Gastrocnemius medialis (tissue), 4 donors: ENCODE measurements at regions of chr20 and their contacts with region 1.

Region 1: GRCh38 chr20:53869466-53870258 is 200.7 kb downstream of the BCAS1 start:
- DNase-seq: peak; percentile 33 to 38
- ATAC-seq: peak; percentile 80 to 95
- H3K4me3 ChIP-seq: no peak overlapping the region
- H3K27ac ChIP-seq: peak overlapping the region in 2 of 4 donors; percentile 13 to 45
- H3K4me1 ChIP-seq: peaks cover 5 to 23% of the 10 kb centered on the region in 2 donors
- H3K27me3 ChIP-seq: no peaks in the 10 kb centered on the region
- CTCF ChIP-seq: peak; percentile 42 to 74 (median 62)
- POLR2A ChIP-seq: no peak

Region 2: GRCh38 chr20:53570521-53571357 is 298.9 kb before region 1 on chr20:
- in situ Hi-C with region 1: loop called in 1 of 4 experiments (anchors 10 kb)
- intact Hi-C with region 1: no loop called
- DNase-seq: no peak
- ATAC-seq: no peak
- H3K4me3 ChIP-seq: no peak overlapping the region
- H3K27ac ChIP-seq: no peak overlapping the region
- H3K4me1 ChIP-seq: no peaks in the 10 kb centered on the region
- H3K27me3 ChIP-seq: no peaks in the 10 kb centered on the region
- CTCF ChIP-seq: no peak
- POLR2A ChIP-seq: no peak

Region 3: DNA sequence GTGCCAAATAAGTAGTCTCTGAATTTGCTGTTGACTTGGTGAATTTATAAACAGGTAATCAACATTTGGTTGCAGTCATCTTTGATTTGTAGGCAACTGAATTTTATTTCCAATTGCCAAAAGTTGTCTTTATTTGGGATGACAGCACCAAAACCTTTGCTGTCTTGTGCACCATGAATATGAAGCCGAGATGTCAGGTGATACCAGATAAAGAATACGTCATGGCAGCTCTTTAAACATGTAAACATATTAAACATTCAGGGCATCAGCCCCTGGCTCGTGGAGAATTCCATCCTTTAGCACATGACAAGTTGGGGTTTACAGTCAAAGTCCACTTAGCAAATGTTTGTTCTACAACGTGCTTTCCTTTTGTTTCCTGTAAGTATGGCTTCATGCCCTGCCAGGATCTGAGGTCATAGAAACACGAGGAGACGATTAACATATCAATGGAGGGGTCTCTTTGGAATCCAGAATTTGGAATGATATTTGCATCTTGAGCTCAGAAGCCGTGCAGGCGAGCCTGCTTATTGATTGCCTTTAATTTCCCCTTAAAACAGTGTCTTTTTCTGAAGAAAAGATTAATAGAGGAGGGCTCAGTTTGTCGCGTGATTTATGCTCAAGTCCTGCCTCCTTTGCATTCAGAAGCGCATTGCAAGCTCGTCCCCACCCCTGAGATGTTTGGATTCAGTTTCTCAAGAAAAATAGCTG is 105.8 kb before region 1 on chr20:
- in situ Hi-C with region 1: no loop called
- intact Hi-C with region 1: no loop called
- DNase-seq: no peak
- ATAC-seq: no peak
- H3K4me3 ChIP-seq: no peak overlapping the region
- H3K27ac ChIP-seq: no peak overlapping the region
- H3K4me1 ChIP-seq: no peaks in the 10 kb centered on the region
- H3K27me3 ChIP-seq: no peaks in the 10 kb centered on the region
- CTCF ChIP-seq: no peak
- POLR2A ChIP-seq: no peak

Region 4: DNA sequence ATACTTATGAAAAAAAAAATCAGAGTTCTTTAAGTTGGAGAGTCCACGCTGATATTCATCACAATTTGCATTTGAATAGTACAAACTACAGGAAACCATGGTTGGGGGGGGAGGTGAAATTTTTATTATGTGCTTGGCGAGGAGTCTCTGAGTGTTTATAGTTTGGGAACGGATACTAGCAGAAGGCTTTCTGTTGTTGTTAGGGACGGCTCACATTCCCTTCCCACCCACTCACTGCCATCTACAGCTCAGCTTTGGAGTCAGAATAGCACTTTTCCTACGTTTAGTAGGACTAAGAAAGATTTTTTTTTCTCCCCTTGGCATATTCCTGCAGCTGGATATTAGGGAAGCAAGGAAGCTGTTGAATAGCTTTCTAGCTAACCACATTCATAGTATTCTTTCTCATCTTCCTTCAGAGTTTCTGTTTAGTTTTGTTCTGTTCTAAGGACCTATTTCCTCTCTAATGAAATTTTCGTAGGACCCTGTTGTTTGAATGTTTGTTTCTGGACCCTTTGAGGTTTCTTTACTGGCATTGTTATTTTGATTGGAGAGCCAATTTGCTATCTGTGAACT is 40.9 kb before region 1 on chr20:
- in situ Hi-C with region 1: no loop called
- intact Hi-C with region 1: loop called (anchors 5 kb)
- DNase-seq: peak in 1 of 2 donors; percentile 30
- ATAC-seq: peak; percentile 69 to 75
- H3K4me3 ChIP-seq: peak overlapping the region; percentile 18 to 53 (median 32)
- H3K27ac ChIP-seq: peak overlapping the region; percentile 73 to 81 (median 77)
- H3K4me1 ChIP-seq: peaks cover 20 to 36% of the 10 kb centered on the region in 2 donors
- H3K27me3 ChIP-seq: no peaks in the 10 kb centered on the region
- CTCF ChIP-seq: no peak
- POLR2A ChIP-seq: peak in 1 of 2 donors; percentile 3